ENCODE measurements at regions of chr2 and their contacts with region 1.

Region 1: GRCh38 chr2:221085341-221085900 is 486.7 kb downstream of the EPHA4 start:
- DNase-seq: no peak
- H3K4me3 ChIP-seq: no peak overlapping the region
- H3K27ac ChIP-seq: no peak overlapping the region
- H3K4me1 ChIP-seq: no peaks in the 10 kb centered on the region
- H3K27me3 ChIP-seq: no peaks in the 10 kb centered on the region
- CTCF ChIP-seq: no peak

Region 2: DNA sequence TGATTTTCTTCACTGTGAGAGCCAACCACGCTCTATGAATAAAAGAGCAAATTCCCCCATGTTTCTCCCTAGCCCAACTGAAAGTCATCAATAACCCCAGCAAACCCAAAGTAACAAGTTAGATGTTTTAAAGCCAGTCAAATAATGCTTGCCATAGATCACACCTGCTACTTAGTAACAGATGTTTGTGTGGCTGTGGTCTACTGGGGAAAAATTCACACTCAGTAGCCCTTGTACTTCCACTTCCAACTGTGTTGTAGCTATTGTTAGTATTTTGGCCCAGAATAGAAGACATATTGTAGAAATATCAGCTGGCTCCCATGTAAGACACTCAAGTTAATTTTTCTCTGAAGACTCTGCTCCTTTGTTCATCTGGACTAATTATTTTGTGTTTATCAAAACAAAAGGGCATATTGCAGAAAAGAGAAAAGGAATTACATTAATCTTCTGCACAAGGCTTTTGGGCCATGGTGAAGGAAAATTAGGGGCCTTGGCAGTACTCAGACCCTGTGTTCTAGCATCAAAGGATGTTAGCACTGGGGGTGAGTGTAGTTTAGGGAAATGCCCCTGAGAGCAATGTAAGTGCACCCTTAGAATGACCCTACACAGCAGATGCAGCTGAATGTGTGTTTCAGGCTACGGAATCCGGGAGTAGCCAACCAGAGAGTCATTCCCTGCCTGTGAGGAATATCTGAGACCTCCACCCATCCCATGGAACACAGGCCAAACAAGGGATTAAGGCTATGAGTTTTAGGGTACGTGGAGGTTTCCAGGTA is 35.2 kb before region 1 on chr2:
- CTCF ChIA-PET with region 1: no interaction called
- dilution Hi-C with region 1: loop called (anchors 5 kb)
- in situ Hi-C with region 1: no loop called
- intact Hi-C with region 1: no loop called
- DNase-seq: no peak
- H3K4me3 ChIP-seq: no peak overlapping the region
- H3K27ac ChIP-seq: no peak overlapping the region
- H3K4me1 ChIP-seq: no peaks in the 10 kb centered on the region
- H3K27me3 ChIP-seq: peaks cover 2% of the 10 kb centered on the region
- CTCF ChIP-seq: no peak

Region 3: GRCh38 chr2:221100467-221101089 is 15.2 kb after region 1 on chr2:
- CTCF ChIA-PET with region 1: no interaction called
- dilution Hi-C with region 1: no loop called
- in situ Hi-C with region 1: no loop called
- intact Hi-C with region 1: no loop called
- DNase-seq: no peak
- H3K4me3 ChIP-seq: no peak overlapping the region
- H3K27ac ChIP-seq: no peak overlapping the region
- H3K4me1 ChIP-seq: peaks cover 30% of the 10 kb centered on the region
- H3K27me3 ChIP-seq: no peaks in the 10 kb centered on the region
- CTCF ChIP-seq: peak in 1 of 2 donors; percentile 23